ENCODE measurements at regions of chr5 and their contacts with region 1.

Region 1: DNA sequence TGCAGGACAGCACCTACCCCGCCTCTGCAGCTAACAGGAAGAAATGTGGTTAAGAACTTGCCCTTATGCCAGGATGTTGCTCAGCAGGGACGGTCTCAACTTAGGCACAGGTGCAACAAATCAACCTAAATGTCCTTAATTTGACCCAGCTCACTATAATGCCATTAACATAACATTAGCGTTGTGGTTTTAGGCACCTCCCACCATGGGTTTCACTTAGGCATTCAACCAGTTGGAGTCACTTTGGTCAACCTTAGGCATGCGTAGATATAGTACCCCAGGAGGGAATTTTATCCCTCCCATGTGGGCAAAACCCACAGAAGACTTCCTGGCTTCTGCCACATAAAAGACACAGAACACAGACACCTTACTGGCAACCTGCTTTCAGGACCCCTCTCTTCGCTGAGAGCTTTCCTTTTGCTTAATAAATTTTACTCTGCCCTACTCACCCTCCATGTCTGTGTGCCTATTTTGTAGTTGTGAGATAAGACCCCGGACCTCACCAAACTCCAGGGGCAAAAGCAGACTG is 8.7 kb upstream of the ERAP1 start:
- DNase-seq: peak; percentile 84
- H3K4me3 Mint-ChIP-seq: peak overlapping the region; percentile 71
- H3K27ac Mint-ChIP-seq: peak overlapping the region; percentile 91
- H3K4me1 Mint-ChIP-seq: peaks cover 80% of the 10 kb centered on the region
- H3K27me3 Mint-ChIP-seq: no peaks in the 10 kb centered on the region

Region 2: DNA sequence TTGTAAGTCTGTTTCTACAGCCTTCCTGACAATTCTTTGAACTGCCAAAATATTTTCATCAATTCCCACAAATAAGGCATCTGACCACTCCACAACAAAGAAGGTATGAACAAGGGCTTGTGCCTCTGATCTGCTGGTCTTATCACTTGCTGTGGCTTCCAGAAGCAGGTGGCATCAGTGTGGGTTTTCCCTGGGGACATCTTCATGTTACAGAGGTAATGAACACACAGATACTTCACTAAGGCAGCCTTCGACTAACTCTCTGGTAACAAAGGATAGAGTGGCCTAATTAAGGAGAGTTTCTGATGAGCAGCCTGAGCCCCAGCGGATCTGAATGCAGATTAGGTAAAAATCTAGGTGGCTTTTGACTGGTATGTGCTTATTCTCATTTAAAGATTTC is 44.6 kb after region 1 on chr5:
- CTCF ChIA-PET with region 1: interaction called, 4 read pairs
- intact Hi-C with region 1: loop called (anchors 1 kb)
- DNase-seq: no peak
- H3K4me3 Mint-ChIP-seq: no peak overlapping the region
- H3K27ac Mint-ChIP-seq: no peak overlapping the region
- H3K4me1 Mint-ChIP-seq: peaks cover 28% of the 10 kb centered on the region
- H3K27me3 Mint-ChIP-seq: peaks cover 2% of the 10 kb centered on the region

Region 3: GRCh38 chr5:96885518-96886338 is 69.3 kb after region 1 on chr5:
- CTCF ChIA-PET with region 1: no interaction called
- intact Hi-C with region 1: no loop called
- DNase-seq: peak; percentile 61
- H3K4me3 Mint-ChIP-seq: peak overlapping the region; percentile 3
- H3K27ac Mint-ChIP-seq: peak overlapping the region; percentile 88
- H3K4me1 Mint-ChIP-seq: peaks cover 71% of the 10 kb centered on the region
- H3K27me3 Mint-ChIP-seq: no peaks in the 10 kb centered on the region

Region 4: GRCh38 chr5:97183100-97183929 is 366.8 kb after region 1 on chr5 and contains the start of gene RIOK2:
- CTCF ChIA-PET with region 1: no interaction called
- intact Hi-C with region 1: loop called (anchors 2 kb)
- DNase-seq: peak; percentile 97
- H3K4me3 Mint-ChIP-seq: peak within 1 kb of the TSS; percentile 93
- H3K27ac Mint-ChIP-seq: peak within 1 kb of the TSS; percentile 99
- H3K4me1 Mint-ChIP-seq: peaks cover 33% of the 10 kb centered on the region
- H3K27me3 Mint-ChIP-seq: no peaks in the 10 kb centered on the region
- total RNA-seq, gene RIOK2: 29.1 to 32.0 TPM